PC-9 (cell line): ENCODE measurements at regions of chr6 and their contacts with region 1.

Region 1: DNA sequence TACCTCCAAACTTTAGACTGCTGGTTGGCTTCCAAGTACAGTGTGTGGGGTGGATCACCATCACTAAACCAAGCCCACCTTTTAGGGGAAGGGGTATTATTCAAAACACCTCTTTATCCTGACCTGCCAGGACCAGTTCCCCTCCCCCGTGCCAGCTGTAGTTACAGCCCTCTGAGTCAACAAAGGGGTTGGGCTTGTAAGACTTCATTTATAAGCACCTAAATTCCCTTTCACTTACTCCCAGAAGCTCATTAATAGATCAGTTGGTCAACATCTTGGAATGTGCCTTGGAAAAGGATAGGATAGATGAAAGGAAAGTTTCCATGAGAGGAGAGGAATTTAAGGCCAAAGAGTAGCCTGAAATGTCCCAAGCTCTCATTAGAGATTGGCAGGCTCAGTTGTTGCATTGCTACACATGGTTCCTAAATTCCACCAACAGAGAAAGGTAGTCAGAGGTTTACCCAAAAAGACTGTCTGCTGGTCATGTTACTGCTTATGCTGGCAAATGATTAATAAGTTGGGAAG is 59.2 kb downstream of the TNFAIP3 start:
- DNase-seq: peak; percentile 20 to 98
- H3K4me3 ChIP-seq: no peak overlapping the region
- H3K27ac ChIP-seq: peak overlapping the region; percentile 61
- H3K4me1 ChIP-seq: peaks cover 45% of the 10 kb centered on the region
- H3K27me3 ChIP-seq: no peaks in the 10 kb centered on the region
- CTCF ChIP-seq: no peak

Region 2: GRCh38 chr6:136326038-136326553 is 1600.2 kb before region 1 on chr6:
- CTCF ChIA-PET with region 1: no interaction called
- POLR2A ChIA-PET with region 1: no interaction called
- intact Hi-C with region 1: no loop called
- DNase-seq: peak in 1 of 2 experiments; percentile 41
- H3K4me3 ChIP-seq: no peak overlapping the region
- H3K27ac ChIP-seq: no peak overlapping the region
- H3K4me1 ChIP-seq: no peaks in the 10 kb centered on the region
- H3K27me3 ChIP-seq: no peaks in the 10 kb centered on the region
- CTCF ChIP-seq: no peak

Region 3: DNA sequence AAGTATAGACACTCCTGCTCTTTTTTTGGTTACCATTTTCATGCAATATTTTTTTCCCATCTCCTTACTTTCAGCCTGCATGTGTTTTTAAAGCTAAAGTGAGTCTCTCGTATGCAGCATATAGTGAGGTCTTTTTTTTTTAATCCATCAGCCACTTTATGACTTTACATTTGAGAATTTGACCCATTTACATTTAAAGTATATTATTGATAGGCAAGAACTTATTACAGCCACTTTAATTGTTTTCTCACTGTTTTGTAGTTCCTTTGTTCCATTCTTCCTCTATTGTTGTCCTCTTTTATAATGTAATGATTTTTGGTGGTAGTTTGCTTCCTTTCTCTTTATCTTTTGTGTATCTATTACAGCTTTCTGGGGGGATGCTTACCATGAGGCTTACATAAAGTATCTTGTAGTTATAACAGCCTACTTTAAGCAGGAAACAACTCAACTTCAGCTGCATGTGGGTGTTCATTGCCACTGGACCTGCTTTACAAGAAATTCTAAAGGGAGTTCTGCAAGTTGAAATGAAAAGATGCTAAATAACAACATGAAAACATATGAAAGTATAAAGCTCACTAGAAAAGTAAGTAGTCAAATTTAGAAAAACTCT is 12.6 kb after region 1 on chr6:
- CTCF ChIA-PET with region 1: no interaction called
- POLR2A ChIA-PET with region 1: interaction called, 14 read pairs
- intact Hi-C with region 1: no loop called
- DNase-seq: no peak
- H3K4me3 ChIP-seq: no peak overlapping the region
- H3K27ac ChIP-seq: no peak overlapping the region
- H3K4me1 ChIP-seq: peaks cover 7% of the 10 kb centered on the region
- H3K27me3 ChIP-seq: no peaks in the 10 kb centered on the region
- CTCF ChIP-seq: no peak